Dorsolateral prefrontal cortex (tissue), 120 donors: ENCODE measurements at regions of chr2 and their contacts with region 1.

Region 1: GRCh38 chr2:74147727-74148456 is at the start of gene BOLA3:
- DNase-seq: peak; percentile 76 to 94 (median 84)
- H3K4me3 ChIP-seq: peak within 1 kb of the TSS; percentile 59 to 98 (median 84)
- H3K27ac ChIP-seq: peak within 1 kb of the TSS; percentile 3 to 89 (median 79)
- H3K27me3 ChIP-seq: no peaks in the 10 kb centered on the region
- CTCF ChIP-seq: peak in 55 of 56 donors; percentile 43 to 97 (median 84)
- total RNA-seq, gene BOLA3: 15.9 to 49.1 (median 32.0) TPM

Region 2: GRCh38 chr2:73736855-73737779 is 410.8 kb before region 1 on chr2 and contains the start of gene TPRKB:
- intact Hi-C with region 1: loop called in 1 of 2 experiments (anchors 5 kb)
- DNase-seq: peak; percentile 88 to 97 (median 95)
- H3K4me3 ChIP-seq: peak within 1 kb of the TSS; percentile 52 to 95 (median 82)
- H3K27ac ChIP-seq: peak within 1 kb of the TSS in 53 of 59 donors; percentile 5 to 86 (median 70)
- H3K27me3 ChIP-seq: no peaks in the 10 kb centered on the region
- CTCF ChIP-seq: peak in 27 of 56 donors; percentile 5 to 51 (median 24)
- total RNA-seq, gene TPRKB: 12.6 to 29.0 (median 19.5) TPM

Region 3: GRCh38 chr2:73830871-73831401 is 317.0 kb before region 1 on chr2:
- intact Hi-C with region 1: loop called in 1 of 2 experiments (anchors 5 kb)
- DNase-seq: no peak
- H3K4me3 ChIP-seq: peak overlapping the region in 13 of 59 donors; percentile 2 to 96 (median 24)
- H3K27ac ChIP-seq: peak overlapping the region in 43 of 59 donors; percentile 4 to 99 (median 57)
- H3K27me3 ChIP-seq: no peaks in the 10 kb centered on the region
- CTCF ChIP-seq: no peak

Region 4: DNA sequence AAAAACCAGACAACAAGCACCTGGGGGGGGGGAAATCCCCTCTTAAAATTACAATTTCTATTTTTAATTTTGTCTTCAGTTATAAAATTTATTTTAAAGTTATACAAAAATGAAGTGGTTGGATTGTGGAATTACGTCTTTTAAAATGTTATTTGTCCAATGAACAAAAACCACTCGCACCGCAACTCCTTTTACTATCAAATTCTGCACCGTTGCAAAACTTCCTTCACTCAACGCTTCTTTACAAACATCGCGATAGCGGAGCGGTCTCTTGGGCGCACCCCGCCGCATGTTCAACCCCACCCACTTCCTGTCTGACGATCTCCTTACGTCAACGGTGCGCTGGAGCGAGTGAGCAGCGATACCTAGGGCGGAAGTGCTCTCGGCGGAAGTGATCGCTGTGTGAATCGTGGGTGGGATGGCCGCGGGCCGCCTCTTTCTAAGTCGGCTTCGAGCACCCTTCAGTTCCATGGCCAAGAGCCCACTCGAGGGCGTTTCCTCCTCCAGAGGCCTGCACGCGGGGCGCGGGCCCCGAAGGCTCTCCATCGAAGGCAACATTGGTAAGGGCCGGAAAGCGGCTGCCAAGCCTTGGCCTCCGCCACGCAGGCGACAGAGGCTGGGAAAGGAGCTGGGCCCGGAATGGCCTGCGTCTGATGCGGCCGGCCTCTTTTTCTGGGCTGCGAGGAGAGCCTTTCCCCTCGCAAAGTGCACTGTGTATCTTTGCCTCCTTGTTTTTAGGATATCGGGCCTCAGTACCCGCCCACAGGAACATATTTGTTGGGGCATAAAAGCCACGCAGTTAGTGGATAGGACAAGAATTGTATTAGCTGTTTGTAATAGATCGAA is 221.2 kb before region 1 on chr2 and contains the start of gene DGUOK:
- intact Hi-C with region 1: loop called in 1 of 2 experiments (anchors 10 kb)
- DNase-seq: peak; percentile 92 to 99 (median 96)
- H3K4me3 ChIP-seq: peak within 1 kb of the TSS; percentile 65 to 98 (median 86)
- H3K27ac ChIP-seq: peak within 1 kb of the TSS; percentile 59 to 99 (median 90)
- H3K27me3 ChIP-seq: peaks cover 0 to 9% (median 0%) of the 10 kb centered on the region in 45 donors
- CTCF ChIP-seq: peak in 29 of 56 donors; percentile 2 to 56 (median 25)
- total RNA-seq, gene DGUOK: 29.0 to 56.8 (median 44.9) TPM

Region 5: DNA sequence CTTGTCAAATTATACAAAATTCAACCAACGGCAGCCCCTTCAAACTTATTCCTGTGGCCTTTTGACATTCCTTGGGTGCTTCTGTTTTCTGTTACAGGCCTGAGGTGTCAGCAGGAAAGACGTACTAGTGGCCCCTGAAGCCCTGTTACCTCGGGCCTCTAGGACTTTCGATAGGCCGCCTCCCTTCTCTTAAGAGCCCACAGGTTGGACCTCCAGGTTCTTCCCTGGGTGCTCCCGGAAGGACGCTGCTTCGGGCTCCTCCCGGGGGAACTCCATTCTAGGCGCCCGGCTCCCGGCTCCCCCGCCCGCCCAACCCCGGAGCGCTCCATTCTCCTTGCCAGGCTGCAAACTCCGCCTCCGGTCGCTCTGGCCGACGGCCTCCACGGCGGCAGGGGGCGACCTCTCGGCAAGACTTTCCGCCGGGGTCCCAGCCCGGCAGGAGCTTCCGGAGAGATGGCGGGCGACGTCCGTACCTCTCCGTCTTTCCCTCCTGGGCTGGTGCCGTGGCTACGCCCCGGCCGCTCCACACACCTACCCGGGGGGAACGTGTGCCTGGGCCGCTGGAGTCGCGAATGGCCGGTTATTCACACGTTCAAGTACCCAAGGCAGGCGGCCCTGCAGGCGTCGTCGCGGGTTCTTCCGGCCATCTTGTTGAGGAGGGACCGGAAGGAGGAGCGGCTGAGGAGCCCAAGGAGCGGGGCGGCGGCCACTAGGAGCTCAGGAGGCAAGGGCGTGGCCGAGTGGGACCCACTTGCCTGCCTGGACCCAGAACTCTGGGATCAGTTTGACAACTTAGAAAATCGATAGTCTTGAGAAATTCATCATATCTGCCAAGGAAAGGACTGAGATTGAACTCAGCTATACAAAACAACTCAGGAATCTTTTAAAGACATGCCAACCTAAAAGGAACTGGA is 27.7 kb before region 1 on chr2:
- intact Hi-C with region 1: loop called (anchors 1 to 2 kb)
- DNase-seq: peak; percentile 65 to 90 (median 79)
- H3K4me3 ChIP-seq: peak overlapping the region; percentile 51 to 91 (median 71)
- H3K27ac ChIP-seq: peak overlapping the region in 54 of 59 donors; percentile 40 to 95 (median 80)
- H3K27me3 ChIP-seq: no peaks in the 10 kb centered on the region
- CTCF ChIP-seq: peak; percentile 40 to 90 (median 74)

Region 6: DNA sequence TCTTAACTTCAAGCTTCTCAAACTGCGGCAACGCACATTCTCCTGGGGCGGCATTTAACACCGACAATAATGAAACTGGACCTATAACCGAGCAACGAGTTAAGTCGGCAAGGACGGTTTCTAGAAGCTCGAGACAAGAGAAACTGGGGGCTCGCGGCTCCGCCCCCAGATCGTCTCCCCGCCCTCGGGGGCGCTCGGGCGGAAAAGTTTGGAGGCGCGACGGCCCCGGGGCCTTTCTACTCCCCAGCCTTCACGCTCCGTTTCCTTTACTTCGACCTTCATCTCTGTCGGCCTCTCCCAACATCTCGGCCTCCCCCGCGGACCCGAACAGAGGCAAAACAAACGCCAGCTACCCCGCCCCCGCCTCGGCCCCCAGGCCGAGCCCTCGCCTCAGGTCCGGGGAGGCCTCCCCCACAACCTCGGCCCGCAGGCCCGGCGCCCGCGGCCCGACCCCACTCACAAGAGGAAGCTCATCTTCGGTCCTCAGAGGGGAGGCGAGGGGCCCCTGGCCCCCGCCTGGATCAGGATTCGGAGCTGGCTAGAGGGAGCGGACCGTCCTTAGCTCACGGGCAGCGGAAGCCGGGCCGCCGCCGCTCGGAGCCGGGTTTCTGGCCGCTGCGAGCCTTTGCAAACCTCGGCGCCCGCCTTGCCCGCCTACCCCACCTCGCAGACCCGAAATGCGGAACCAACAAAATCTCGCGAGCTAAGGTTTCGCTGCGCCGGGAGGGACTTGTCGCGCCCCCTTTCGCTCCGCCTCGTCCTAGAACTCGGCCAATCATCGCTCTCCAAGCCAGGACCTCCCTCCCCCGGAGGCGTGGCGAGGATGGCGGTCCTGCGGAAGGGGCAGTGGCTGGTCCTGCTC is 30.5 kb after region 1 on chr2 and contains the start of gene MOB1A:
- intact Hi-C with region 1: loop called in 1 of 2 experiments (anchors 1 kb)
- DNase-seq: peak; percentile 90 to 99 (median 98)
- H3K4me3 ChIP-seq: peak within 1 kb of the TSS; percentile 56 to 96 (median 87)
- H3K27ac ChIP-seq: peak within 1 kb of the TSS in 58 of 59 donors; percentile 54 to 95 (median 88)
- H3K27me3 ChIP-seq: no peaks in the 10 kb centered on the region
- CTCF ChIP-seq: peak in 38 of 56 donors; percentile 23 to 77 (median 53)
- total RNA-seq, gene MOB1A: 19.4 to 66.5 (median 35.5) TPM

Region 7: GRCh38 chr2:74198461-74199274 is 50.8 kb after region 1 on chr2 and contains the start of gene MTHFD2:
- intact Hi-C with region 1: loop called in 1 of 2 experiments (anchors 5 kb)
- DNase-seq: peak; percentile 69 to 92 (median 84)
- H3K4me3 ChIP-seq: peak within 1 kb of the TSS; percentile 59 to 93 (median 80)
- H3K27ac ChIP-seq: peak within 1 kb of the TSS in 55 of 59 donors; percentile 32 to 92 (median 76)
- H3K27me3 ChIP-seq: no peaks in the 10 kb centered on the region
- CTCF ChIP-seq: peak; percentile 34 to 80 (median 63)
- total RNA-seq, gene MTHFD2: 3.9 to 33.5 (median 9.8) TPM